ENCODE measurements at regions of chr10 and their contacts with region 1.

Region 1: DNA sequence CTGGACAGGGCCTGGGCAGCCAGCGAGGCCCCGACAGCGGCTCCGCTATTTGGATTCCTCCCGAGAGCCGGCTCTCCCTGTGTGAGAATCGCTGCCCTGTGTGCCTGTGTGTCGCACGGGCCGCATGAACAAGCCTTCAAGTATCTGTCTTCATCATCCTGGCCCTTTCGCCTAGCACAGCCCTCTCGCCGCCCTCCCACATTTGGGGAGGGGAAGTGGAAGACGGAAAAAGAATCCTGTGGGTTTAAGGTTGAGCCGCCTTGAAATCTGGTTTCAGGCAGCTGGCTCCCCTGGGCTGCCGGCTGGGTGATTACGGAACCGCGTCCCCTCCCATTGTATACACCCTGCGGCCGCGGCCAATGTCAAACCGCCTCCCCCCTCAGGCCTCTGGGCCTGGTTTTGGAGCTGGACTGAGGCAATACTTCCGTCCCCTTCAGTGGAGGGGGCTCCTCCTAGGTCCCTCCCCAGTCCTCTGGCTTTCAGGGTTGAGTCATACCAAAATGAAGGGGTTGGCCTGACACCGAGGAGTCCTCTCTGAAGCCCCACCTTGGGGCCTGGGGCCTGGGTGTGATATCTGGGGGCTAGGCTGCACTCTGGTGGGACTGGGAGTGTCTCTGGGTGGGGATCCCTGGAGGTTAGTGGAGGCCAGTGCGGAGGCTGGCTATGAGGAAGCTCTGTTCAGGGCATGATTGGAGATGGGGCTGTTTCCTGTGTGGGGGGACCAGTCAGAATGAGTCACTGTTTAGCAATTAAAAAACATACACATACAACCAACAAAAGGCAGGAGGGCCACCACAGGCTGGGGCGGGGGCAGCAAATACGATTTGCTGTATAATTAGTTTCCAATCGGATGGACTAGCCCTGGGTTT is 1.7 kb downstream of the TRIM8 start:
- DNase-seq: peak; percentile 74
- CTCF ChIP-seq: no peak

Region 2: GRCh38 chr10:102660888-102661657 is 15.1 kb after region 1 on chr10:
- CTCF ChIA-PET with region 1: interaction called, 4 read pairs
- POLR2A ChIA-PET with region 1: interaction called, 12 read pairs
- DNase-seq: peak; percentile 90
- CTCF ChIP-seq: no peak